Left colon (tissue), 2 donors: ENCODE measurements at regions of chr3 and their contacts with region 1.

Region 1: GRCh38 chr3:158830391-158830790 is 28.5 kb downstream of the MFSD1 start:
- DNase-seq: no peak
- ATAC-seq: no peak

Region 2: GRCh38 chr3:158560979-158561378 is 269.4 kb before region 1 on chr3:
- intact Hi-C with region 1: no loop called
- DNase-seq: no peak
- ATAC-seq: no peak

Region 3: DNA sequence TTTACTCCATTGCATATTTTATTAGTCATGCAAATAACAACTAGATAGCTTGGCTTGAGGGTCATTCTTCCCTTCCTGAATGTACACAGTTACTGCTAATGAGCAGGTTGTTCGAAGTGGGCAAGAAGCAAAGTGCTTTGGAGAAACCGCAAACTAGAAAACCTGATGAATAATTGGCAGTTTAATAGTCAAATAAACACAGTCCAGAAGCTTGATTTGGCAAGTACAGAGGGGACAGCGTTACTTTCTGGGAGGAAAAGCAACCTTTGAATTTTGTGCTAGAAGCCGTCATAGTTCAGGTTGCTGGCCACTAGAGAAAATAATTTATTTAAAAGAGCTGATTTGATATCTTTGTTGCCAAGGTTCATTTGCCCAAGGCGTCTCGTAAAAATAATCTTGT is 66.3 kb after region 1 on chr3:
- intact Hi-C with region 1: loop called in 1 of 2 experiments (anchors 10 kb)
- DNase-seq: no peak
- ATAC-seq: no peak